ENCODE measurements at regions of chr17 and their contacts with region 1.

Region 1: DNA sequence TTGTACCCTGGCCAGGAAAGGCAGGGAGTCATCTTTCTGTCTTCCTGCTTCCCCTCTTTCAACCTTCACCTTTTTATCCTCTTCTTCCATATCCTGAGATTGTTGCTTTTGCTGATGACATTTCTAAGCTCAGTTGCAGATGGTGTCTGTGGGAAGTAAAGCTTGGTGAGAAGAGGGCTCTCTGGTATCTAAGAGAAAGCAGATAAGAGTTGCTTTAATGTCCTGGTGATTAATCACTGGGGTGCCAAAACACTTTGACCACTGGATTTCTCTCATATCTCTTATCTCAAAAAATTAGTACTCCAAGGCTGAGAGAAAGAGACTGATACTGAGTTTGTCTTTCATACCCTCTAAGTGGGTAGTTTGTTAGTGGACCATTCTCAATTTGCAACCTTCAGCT is 71.3 kb downstream of the NEUROD2 start:
- DNase-seq: no peak
- H3K4me3 Mint-ChIP-seq: no peak overlapping the region
- H3K27ac Mint-ChIP-seq: no peak overlapping the region
- H3K4me1 Mint-ChIP-seq: peaks cover 28% of the 10 kb centered on the region
- H3K27me3 Mint-ChIP-seq: no peaks in the 10 kb centered on the region

Region 2: GRCh38 chr17:39517224-39517623 is 19.2 kb before region 1 on chr17:
- CTCF ChIA-PET with region 1: no interaction called
- POLR2A ChIA-PET with region 1: no interaction called
- DNase-seq: no peak
- H3K4me3 Mint-ChIP-seq: no peak overlapping the region
- H3K27ac Mint-ChIP-seq: no peak overlapping the region
- H3K4me1 Mint-ChIP-seq: peaks cover 2% of the 10 kb centered on the region
- H3K27me3 Mint-ChIP-seq: no peaks in the 10 kb centered on the region

Region 3: DNA sequence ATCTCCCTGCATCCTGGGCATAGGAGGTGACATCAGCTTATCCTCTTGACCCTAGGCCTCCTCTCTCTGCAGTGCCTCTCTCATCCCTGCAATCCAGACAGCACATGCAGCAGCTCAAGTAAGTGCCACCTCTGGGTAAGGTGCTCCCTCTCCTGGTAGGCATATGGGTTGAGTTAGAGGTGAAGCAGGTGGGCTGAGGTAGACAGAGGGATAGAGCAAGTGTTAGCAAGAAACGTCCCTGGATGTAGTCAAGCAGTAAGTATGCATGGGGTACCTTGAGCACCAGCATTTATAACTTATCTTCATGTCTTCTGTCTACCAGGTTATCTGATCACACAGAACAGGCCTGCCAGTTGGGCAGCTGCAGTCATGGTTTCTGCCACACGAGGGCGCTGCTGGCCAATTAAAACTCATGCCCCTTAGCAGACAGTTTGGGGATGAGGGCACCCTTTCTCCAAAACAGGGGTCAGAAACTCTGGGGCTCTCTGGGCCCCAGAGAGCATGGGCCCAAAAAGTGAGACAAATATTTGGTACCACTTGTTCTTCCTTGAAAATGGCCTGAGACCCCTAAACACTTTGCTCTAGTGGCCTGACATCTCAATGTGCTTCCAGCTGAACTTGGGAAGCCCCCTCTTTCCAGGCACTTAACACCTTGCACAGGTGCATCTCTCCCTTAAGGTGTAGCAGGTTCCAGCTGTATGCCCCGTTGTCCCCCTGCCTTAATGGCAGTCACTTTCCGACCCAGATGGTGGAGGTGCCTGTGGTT is 11.4 kb after region 1 on chr17:
- CTCF ChIA-PET with region 1: interaction called, 17 read pairs
- POLR2A ChIA-PET with region 1: no interaction called
- DNase-seq: peak; percentile 79
- H3K4me3 Mint-ChIP-seq: no peak overlapping the region
- H3K27ac Mint-ChIP-seq: no peak overlapping the region
- H3K4me1 Mint-ChIP-seq: no peaks in the 10 kb centered on the region
- H3K27me3 Mint-ChIP-seq: no peaks in the 10 kb centered on the region

Region 4: GRCh38 chr17:39605492-39606433 is 69.3 kb after region 1 on chr17:
- CTCF ChIA-PET with region 1: no interaction called
- POLR2A ChIA-PET with region 1: no interaction called
- DNase-seq: no peak
- H3K4me3 Mint-ChIP-seq: no peak overlapping the region
- H3K27ac Mint-ChIP-seq: no peak overlapping the region
- H3K4me1 Mint-ChIP-seq: peaks cover 12% of the 10 kb centered on the region
- H3K27me3 Mint-ChIP-seq: peaks cover 74% of the 10 kb centered on the region